Spleen (tissue), 13 donors: ENCODE measurements at regions of chr7 and their contacts with region 1.

Region 1: DNA sequence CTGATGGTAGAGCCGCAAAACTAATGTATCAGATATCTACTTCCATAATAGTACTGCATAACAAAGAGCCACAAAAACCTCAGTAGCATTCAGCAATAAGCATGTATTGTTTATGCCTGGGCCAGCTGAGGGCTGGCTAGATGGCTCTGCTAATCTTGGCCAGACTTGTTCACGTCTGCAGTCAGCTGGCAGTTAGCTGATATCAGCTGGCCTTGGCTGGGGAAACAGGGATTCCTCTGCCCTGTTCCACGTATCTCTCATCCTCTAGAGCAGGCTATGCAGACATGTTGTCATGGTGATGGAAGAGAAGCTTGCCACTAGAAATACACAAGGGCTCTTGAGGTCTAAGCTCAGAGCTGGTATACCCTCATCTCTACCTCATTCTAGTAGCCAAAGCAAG is 62.9 kb downstream of the GRM8 start:
- DNase-seq: no peak
- H3K4me3 ChIP-seq: no peak overlapping the region
- H3K27ac ChIP-seq: no peak overlapping the region
- H3K4me1 ChIP-seq: no peaks in the 10 kb centered on the region
- H3K27me3 ChIP-seq: peaks cover 0 to 6% (median 0%) of the 10 kb centered on the region in 7 donors
- CTCF ChIP-seq: no peak
- POLR2A ChIP-seq: no peak

Region 2: DNA sequence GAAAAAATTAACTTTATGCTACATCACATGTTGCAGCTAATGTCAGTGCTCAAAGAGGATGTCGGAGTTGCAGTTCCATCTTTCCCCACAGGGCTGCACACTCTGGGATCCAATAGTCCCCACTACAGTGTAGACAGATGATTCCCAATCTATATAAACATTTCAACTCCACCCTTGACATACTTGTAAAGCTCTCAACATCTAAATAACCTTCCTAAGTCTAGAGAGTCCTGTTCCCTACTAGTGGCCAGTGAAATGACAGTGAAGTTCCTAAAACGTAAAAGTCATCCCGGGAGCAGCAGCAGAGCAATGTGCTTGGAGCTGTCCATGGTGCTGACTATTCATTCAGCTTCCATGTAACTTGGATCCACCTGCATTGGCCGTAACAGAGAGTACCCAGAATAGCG is 82.3 kb before region 1 on chr7:
- intact Hi-C with region 1: no loop called
- DNase-seq: no peak
- H3K4me3 ChIP-seq: no peak overlapping the region
- H3K27ac ChIP-seq: no peak overlapping the region
- H3K4me1 ChIP-seq: no peaks in the 10 kb centered on the region
- H3K27me3 ChIP-seq: peaks cover 0 to 1% (median 0%) of the 10 kb centered on the region in 7 donors
- CTCF ChIP-seq: peak in 5 of 11 experiments; percentile 8 to 23 (median 16)
- POLR2A ChIP-seq: no peak

Region 3: DNA sequence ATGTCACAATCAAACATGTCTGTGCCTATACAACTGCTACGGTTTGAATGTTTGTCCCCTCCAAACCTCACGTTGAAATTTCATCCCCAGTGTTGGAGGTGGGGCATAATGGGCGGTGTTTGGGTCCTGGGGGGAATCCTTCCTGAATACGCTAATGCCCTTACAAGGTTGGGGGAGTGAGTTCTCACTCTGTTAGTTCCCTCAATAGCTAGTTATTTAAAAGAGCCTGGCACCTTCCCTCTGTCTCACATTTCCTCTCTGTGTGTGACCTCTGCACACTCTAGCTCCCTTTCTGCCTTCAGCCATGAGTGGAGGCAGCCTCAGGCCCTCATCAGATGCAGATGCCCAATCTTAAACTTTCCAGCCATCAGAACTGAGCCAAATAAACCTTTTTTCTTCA is 66.7 kb before region 1 on chr7:
- intact Hi-C with region 1: loop called (anchors 10 kb)
- DNase-seq: no peak
- H3K4me3 ChIP-seq: no peak overlapping the region
- H3K27ac ChIP-seq: no peak overlapping the region
- H3K4me1 ChIP-seq: no peaks in the 10 kb centered on the region
- H3K27me3 ChIP-seq: no peaks in the 10 kb centered on the region
- CTCF ChIP-seq: no peak
- POLR2A ChIP-seq: no peak